CD14-positive monocyte (primary cell): ENCODE measurements at regions of chr3 and their contacts with region 1.

Region 1: DNA sequence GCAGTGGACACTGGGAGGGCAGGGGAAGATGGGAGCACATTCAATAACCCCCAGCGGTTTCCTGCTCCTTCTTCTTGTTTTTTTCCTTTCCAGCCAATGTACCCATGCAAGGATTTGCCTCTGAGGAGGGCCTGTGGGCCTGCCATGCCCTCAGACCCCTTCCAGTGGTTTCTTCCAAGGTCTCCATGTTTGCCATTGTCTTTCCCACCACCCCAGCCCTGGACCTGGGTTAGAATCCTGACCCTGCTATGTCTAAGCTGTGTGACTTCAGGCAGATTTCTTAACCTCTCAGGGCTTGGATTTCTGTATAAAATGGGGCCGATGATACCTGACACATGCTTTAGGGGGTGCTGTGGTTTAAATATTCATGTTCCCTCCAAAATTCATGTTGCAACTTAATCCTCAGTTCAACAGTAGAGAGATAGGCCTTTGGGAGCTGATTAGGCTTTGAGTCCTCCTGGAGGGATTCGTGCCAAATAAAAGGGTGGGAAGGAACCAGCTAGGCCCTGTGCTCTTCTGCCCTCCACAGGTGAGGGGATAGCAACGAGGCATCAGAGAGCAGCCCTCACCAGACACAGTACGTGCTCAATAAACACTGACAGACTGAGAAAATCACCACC is 46.3 kb upstream of the FLNB start:
- DNase-seq: peak in 2 of 3 donors; percentile 35 to 50
- H3K4me3 ChIP-seq: no peak overlapping the region
- H3K4me3 Mint-ChIP-seq: no peak overlapping the region
- H3K27ac ChIP-seq: no peak overlapping the region
- H3K27ac Mint-ChIP-seq: peak overlapping the region in 1 of 7 donors; percentile 33
- H3K4me1 ChIP-seq: peaks cover 24 to 30% of the 10 kb centered on the region in 2 donors
- H3K4me1 Mint-ChIP-seq: peaks cover 33% of the 10 kb centered on the region
- H3K27me3 ChIP-seq: no peaks in the 10 kb centered on the region
- H3K27me3 Mint-ChIP-seq: peaks cover 0 to 2% (median 2%) of the 10 kb centered on the region in 3 donors
- CTCF ChIP-seq: peak; percentile 55

Region 2: DNA sequence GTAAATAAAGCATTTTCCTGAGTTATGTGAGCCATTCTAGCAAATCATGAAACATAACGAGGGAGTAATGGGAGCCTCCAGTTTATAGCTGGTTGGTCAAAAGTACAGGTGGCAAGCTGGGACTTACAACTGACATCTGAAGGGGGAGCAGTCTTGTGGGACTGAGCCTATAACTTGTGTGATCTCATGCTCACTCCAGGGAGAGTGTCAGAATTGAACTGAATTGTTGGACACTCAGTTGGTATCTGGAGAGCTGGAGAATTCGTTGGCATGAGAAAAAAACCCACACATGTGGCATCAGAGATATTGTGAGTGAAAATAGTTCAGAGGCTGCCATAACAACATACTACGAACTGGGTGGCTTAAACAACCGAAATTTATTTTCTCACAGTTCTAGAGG is 246.3 kb before region 1 on chr3:
- intact Hi-C with region 1: no loop called
- DNase-seq: no peak
- H3K4me3 ChIP-seq: no peak overlapping the region
- H3K4me3 Mint-ChIP-seq: no peak overlapping the region
- H3K27ac ChIP-seq: no peak overlapping the region
- H3K27ac Mint-ChIP-seq: no peak overlapping the region
- H3K4me1 ChIP-seq: no peaks in the 10 kb centered on the region
- H3K4me1 Mint-ChIP-seq: no peaks in the 10 kb centered on the region
- H3K27me3 ChIP-seq: no peaks in the 10 kb centered on the region
- H3K27me3 Mint-ChIP-seq: peaks cover 0 to 2% (median 0%) of the 10 kb centered on the region in 3 donors
- CTCF ChIP-seq: no peak

Region 3: DNA sequence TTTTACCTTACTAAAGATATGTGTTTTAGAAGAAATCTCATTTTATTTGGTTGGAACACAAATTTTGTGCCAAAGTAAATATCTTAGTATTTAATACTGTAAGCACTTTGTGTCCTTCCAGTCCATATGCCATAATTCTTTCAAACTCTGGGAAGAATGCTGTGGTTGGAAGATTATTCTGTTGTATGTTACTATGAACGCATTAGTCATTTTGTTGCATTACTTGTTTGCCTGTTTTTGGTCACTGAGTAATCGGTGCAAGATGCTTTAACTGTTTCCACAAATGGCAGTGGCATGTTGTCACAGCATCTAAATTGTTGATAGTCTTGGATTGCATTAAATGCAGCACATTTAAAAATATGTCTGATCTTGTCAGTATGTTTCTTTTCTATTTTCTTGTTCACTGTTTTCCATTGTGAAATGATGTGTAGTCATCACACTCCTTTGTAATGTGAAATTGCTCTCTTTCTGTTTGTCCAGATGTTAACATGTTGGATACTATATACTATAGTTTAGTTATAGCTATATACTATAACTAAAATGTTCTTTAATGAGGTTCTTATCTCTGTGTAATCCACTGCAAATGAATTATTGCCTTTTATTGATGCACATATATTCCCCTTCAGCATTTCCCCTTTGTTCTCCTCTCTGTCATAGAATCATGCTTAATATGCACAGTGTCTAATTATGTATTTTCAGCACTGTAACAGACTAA is 43.7 kb before region 1 on chr3:
- intact Hi-C with region 1: no loop called
- DNase-seq: no peak
- H3K4me3 ChIP-seq: no peak overlapping the region
- H3K4me3 Mint-ChIP-seq: no peak overlapping the region
- H3K27ac ChIP-seq: no peak overlapping the region
- H3K27ac Mint-ChIP-seq: no peak overlapping the region
- H3K4me1 ChIP-seq: no peaks in the 10 kb centered on the region
- H3K4me1 Mint-ChIP-seq: peaks cover 5% of the 10 kb centered on the region
- H3K27me3 ChIP-seq: no peaks in the 10 kb centered on the region
- H3K27me3 Mint-ChIP-seq: no peaks in the 10 kb centered on the region
- CTCF ChIP-seq: no peak

Region 4: DNA sequence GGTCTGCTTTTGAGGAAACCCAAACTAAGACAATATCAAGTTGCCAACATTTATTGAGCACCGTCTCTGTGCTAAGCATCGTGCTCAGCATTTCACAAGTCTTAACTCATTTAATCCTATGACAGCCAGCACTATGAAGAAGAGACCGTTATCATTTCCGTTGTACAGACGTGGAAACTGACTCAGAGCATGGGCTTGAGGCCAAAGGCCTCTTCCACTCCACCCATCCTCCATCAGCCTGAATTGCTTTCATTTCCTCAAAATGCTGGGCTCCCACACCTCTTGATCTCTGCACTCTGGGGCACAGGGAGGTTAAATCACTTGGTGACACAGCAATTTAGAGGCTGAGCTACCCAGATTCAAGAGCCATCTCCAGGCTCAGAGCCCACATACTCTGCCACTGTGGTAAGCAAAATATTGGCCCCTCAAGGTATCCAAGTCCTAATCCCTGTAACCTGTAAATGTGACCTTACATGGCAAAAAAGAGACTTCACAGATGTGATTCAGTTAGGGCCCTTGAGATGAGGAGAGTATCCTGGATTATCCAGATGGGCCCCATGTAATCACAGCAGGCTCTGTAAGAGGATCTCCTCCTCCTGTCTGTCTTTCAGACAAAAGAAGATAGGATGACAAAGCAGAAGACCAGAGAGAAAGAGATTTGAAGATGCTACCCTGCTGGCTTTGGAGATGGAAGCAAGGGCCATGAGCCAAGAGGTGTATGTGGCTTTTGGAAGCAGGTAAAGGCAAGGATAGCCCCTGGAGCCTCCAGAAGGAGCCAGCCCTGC is 22.0 kb after region 1 on chr3:
- intact Hi-C with region 1: loop called in 1 of 2 experiments (anchors 2 kb)
- DNase-seq: peak; percentile 97 to 99 (median 98)
- H3K4me3 ChIP-seq: peak overlapping the region in 1 of 3 experiments; percentile 57
- H3K4me3 Mint-ChIP-seq: peak overlapping the region; percentile 24 to 83
- H3K27ac ChIP-seq: peak overlapping the region; percentile 79 to 85
- H3K27ac Mint-ChIP-seq: peak overlapping the region; percentile 94 to 99 (median 98)
- H3K4me1 ChIP-seq: peaks cover 65 to 68% of the 10 kb centered on the region in 2 donors
- H3K4me1 Mint-ChIP-seq: peaks cover 75% of the 10 kb centered on the region
- H3K27me3 ChIP-seq: no peaks in the 10 kb centered on the region
- H3K27me3 Mint-ChIP-seq: peaks cover 0 to 15% (median 5%) of the 10 kb centered on the region in 3 donors
- CTCF ChIP-seq: no peak

Region 5: GRCh38 chr3:57998366-57999283 is 36.7 kb after region 1 on chr3:
- intact Hi-C with region 1: loop called in 1 of 2 experiments (anchors 5 kb)
- DNase-seq: peak in 1 of 3 donors; percentile 38
- H3K4me3 ChIP-seq: peak overlapping the region in 1 of 3 experiments; percentile 5
- H3K4me3 Mint-ChIP-seq: peak overlapping the region in 1 of 2 donors; percentile 84
- H3K27ac ChIP-seq: no peak overlapping the region
- H3K27ac Mint-ChIP-seq: peak overlapping the region in 4 of 7 donors; percentile 6 to 72 (median 17)
- H3K4me1 ChIP-seq: peaks cover 25 to 35% of the 10 kb centered on the region in 2 donors
- H3K4me1 Mint-ChIP-seq: peaks cover 36% of the 10 kb centered on the region
- H3K27me3 ChIP-seq: no peaks in the 10 kb centered on the region
- H3K27me3 Mint-ChIP-seq: peaks cover 2 to 7% (median 3%) of the 10 kb centered on the region in 3 donors
- CTCF ChIP-seq: no peak

Region 6: GRCh38 chr3:58008140-58009025 is 46.4 kb after region 1 on chr3 and contains the start of gene FLNB:
- intact Hi-C with region 1: loop called in 1 of 2 experiments (anchors 5 kb)
- DNase-seq: peak; percentile 52 to 75 (median 73)
- H3K4me3 ChIP-seq: peak within 1 kb of the TSS; percentile 68 to 90 (median 70)
- H3K4me3 Mint-ChIP-seq: peak within 1 kb of the TSS; percentile 93 to 97
- H3K27ac ChIP-seq: peak within 1 kb of the TSS; percentile 21 to 73
- H3K27ac Mint-ChIP-seq: peak within 1 kb of the TSS; percentile 72 to 93 (median 82)
- H3K4me1 ChIP-seq: peaks cover 25 to 28% of the 10 kb centered on the region in 2 donors
- H3K4me1 Mint-ChIP-seq: peaks cover 35% of the 10 kb centered on the region
- H3K27me3 ChIP-seq: no peaks in the 10 kb centered on the region
- H3K27me3 Mint-ChIP-seq: peaks cover 2 to 5% (median 2%) of the 10 kb centered on the region in 3 donors
- CTCF ChIP-seq: peak; percentile 81
- polyA plus RNA-seq, gene FLNB: 0.47 to 4.0 (median 2.1) TPM

Region 7: GRCh38 chr3:58116161-58116955 is 154.4 kb after region 1 on chr3:
- intact Hi-C with region 1: no loop called
- DNase-seq: no peak
- H3K4me3 ChIP-seq: no peak overlapping the region
- H3K4me3 Mint-ChIP-seq: no peak overlapping the region
- H3K27ac ChIP-seq: no peak overlapping the region
- H3K27ac Mint-ChIP-seq: peak overlapping the region in 2 of 7 donors; percentile 23 to 69
- H3K4me1 ChIP-seq: peaks cover 6 to 10% of the 10 kb centered on the region in 2 donors
- H3K4me1 Mint-ChIP-seq: peaks cover 10% of the 10 kb centered on the region
- H3K27me3 ChIP-seq: no peaks in the 10 kb centered on the region
- H3K27me3 Mint-ChIP-seq: no peaks in the 10 kb centered on the region
- CTCF ChIP-seq: no peak